OCI-LY7 (cell line): ENCODE measurements at regions of chr6 and their contacts with region 1.

Region 1: DNA sequence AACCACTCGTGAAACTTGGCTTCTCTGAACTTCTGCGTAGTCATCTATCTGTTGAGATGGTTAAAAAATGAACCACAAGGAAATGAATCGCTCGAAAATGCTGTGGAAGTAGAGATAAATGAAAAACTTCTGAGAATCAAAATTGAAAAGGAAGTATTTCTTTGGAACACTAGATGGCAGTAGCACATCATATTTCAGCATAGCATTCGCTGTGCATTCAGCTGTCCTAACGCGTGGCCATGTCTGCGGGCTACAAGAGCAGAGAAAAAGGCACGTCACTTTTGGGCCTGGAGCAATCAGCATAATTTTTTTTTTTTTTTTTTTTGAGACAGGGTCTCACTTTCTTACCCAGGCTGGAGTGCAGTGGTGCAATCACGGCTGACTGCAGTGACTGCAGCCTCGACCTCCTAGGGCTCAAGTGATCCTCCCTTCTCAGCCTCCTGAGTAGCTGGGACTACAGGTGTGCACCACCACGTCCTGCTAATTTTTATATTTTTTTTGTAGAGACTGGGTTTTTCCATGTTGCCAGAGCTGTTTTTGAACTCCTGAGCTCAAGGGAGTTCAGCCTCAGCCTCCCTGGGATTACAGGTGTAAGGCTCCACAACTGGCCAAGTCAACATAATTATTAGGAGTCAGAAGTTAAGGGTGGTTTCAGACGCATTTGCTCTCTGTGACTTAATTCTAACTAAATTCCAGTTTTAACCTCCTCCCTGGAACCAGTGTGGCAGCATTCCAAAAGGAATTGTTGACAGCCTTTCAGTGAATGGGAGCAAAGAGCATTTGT is 8.8 kb upstream of the PERP start:
- DNase-seq: peak; percentile 72
- H3K4me3 ChIP-seq: no peak overlapping the region
- H3K27ac ChIP-seq: no peak overlapping the region
- H3K4me1 ChIP-seq: peaks cover 12% of the 10 kb centered on the region
- CTCF ChIP-seq: peak; percentile 88

Region 2: DNA sequence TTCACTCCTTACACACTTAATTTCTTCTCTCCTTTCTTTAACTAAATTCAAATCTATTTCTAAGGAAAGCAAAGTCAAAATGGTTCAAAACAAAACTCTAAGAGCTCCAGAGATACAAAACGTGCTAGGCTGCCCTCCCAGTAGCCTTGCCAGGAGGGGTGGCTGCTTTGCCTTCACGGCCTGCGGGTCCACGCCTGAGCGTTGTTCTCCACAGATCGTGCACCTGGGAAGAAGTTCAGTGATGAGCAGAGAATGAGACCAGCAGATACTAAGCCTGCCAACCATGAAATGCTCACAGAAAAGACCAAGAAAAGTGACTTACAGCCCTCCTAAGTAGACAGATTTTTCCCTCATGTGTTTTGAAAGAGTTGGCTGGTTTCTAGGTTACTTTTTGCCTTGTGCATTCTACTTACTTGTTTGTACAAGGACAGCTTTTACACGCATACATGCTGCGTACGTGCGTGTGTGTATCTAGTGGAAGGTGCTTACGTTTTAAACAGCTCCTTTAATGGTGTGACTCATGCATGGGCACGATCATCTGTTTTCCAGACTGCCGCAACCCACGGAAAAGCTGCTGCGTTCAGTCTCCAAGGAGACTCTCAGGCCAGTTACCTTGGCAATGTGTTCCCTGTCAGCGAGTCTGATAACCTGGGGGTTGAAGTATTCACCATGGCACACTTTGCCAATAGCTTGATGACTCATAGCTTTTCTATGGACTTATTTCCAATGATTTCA is 134.6 kb after region 1 on chr6:
- CTCF ChIA-PET with region 1: no interaction called
- POLR2A ChIA-PET with region 1: no interaction called
- intact Hi-C with region 1: no loop called
- DNase-seq: no peak
- H3K4me3 ChIP-seq: no peak overlapping the region
- H3K27ac ChIP-seq: no peak overlapping the region
- H3K4me1 ChIP-seq: no peaks in the 10 kb centered on the region
- CTCF ChIP-seq: no peak

Region 3: DNA sequence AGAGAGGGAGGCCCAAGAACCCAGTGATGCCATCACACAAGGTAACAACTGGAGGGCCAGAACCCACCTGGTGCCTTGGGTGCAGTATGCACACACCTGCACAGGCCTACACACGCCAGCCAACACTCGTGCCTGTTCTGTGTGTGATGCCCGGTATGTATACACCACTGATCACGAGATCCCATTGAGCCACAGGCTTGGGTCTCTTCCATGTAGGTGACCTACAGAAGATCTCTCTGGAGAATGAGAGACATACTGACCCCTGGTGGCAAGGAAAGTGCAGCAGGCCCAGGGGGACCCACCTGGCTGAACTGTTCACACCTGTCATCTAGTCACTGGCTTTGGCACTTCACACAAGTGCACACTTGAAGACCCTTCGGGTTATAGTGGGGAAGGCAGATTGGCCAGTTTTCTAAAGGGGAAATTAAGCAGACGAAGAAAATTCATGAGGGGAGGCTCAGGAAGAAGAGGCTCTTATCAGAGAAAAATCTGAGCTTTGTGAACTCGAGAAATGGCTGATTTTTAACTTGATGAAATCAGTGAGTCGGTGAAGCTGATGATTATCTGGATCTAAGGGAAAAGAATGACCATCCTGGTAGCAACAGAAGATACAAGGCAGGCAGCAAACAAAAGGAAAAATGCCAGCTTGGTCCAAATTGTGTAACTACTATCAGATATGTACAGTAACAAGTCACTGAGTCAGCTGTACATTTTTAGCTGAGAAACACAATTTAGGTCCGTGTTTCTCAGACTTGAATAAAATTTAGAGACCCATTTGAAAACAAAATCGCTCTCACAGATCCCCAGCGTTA is 171.3 kb after region 1 on chr6:
- CTCF ChIA-PET with region 1: interaction called, 5 read pairs
- POLR2A ChIA-PET with region 1: no interaction called
- intact Hi-C with region 1: loop called (anchors 1 kb)
- DNase-seq: peak; percentile 48
- H3K4me3 ChIP-seq: no peak overlapping the region
- H3K27ac ChIP-seq: no peak overlapping the region
- H3K4me1 ChIP-seq: no peaks in the 10 kb centered on the region
- CTCF ChIP-seq: peak; percentile 81

Region 4: DNA sequence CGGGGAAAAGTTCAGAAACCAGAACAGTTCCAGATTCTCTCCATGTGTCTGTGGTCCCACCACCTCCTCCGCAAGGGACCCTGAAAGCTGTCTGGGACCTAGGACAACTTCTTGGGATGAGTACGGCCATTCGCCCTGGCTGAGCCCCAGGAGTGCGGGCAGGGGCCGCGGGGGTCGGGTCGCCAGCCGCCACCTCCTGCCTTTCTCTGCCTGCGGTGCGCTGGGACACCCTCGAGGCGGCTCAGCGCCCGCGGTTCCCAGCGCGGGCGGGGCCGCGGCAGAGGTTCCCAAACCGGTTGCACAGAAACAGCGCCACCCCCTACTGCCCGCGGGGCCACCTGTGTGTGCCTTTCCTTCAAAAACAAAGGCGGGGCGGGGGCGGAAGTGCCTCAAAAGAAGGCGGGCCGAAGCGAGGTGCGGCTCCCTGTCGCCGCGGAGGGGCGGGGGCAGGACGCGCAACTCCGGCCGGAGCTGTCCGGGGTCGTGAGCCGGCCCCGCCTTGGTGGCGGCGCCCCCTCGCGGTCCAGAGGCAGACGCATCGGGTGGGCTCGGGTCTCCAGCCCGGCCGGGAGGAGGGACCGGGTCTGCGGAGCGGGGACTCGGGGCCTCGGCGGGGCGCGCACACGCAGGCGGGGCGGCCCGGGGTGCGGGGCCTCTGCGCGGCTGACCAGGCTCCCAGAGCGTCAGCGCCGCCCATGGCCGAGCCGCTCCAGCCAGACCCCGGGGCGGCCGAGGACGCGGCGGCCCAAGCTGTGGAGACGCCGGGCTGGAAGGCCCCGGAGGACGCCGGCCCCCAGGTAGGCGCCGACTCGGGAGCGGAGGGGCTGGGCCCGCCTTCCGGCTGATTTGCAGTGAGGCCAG is 288.0 kb after region 1 on chr6 and contains the start of gene HEBP2:
- CTCF ChIA-PET with region 1: interaction called, 6 read pairs
- POLR2A ChIA-PET with region 1: interaction called, 5 read pairs
- intact Hi-C with region 1: loop called (anchors 1 kb)
- DNase-seq: peak; percentile 97
- H3K4me3 ChIP-seq: peak within 1 kb of the TSS; percentile 84
- H3K27ac ChIP-seq: peak within 1 kb of the TSS; percentile 43
- H3K4me1 ChIP-seq: peaks cover 20% of the 10 kb centered on the region
- CTCF ChIP-seq: peak; percentile 76
- total RNA-seq, gene HEBP2: 14.0 and 25.0 TPM in 2 replicates

Region 5: GRCh38 chr6:138428944-138429598 is 313.0 kb after region 1 on chr6:
- CTCF ChIA-PET with region 1: interaction called, 3 read pairs
- POLR2A ChIA-PET with region 1: interaction called, 4 read pairs
- intact Hi-C with region 1: loop called (anchors 5 kb)
- DNase-seq: peak; percentile 73
- H3K4me3 ChIP-seq: no peak overlapping the region
- H3K27ac ChIP-seq: no peak overlapping the region
- H3K4me1 ChIP-seq: no peaks in the 10 kb centered on the region
- CTCF ChIP-seq: peak; percentile 95

Region 6: DNA sequence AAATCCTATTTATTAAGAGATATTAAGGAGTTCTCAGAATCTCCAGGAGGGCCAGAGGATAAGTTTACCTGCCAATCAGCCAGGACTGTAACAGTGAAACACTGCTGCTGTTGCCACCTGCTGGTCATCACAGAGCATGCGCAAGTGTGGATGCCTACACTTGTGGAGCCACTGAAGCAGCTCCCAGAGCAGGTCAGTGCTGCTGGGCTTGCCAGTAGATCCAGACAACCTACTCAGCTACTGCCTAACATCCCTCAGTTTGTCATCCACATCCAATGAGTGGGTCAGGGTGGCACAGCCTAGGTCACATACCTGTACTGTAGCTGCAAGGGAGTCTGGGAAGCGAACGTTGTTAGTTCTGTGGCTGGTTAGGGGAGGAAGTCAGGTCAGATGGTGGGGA is 401.6 kb after region 1 on chr6:
- CTCF ChIA-PET with region 1: interaction called, 10 read pairs
- POLR2A ChIA-PET with region 1: no interaction called
- intact Hi-C with region 1: loop called (anchors 2 kb)
- DNase-seq: peak; percentile 76
- H3K4me3 ChIP-seq: no peak overlapping the region
- H3K27ac ChIP-seq: no peak overlapping the region
- H3K4me1 ChIP-seq: peaks cover 5% of the 10 kb centered on the region
- CTCF ChIP-seq: peak; percentile 85

Region 7: GRCh38 chr6:138588805-138589434 is 472.9 kb after region 1 on chr6:
- CTCF ChIA-PET with region 1: no interaction called
- POLR2A ChIA-PET with region 1: no interaction called
- intact Hi-C with region 1: loop called (anchors 1 kb)
- DNase-seq: peak; percentile 68
- H3K4me3 ChIP-seq: no peak overlapping the region
- H3K27ac ChIP-seq: no peak overlapping the region
- H3K4me1 ChIP-seq: peaks cover 16% of the 10 kb centered on the region
- CTCF ChIP-seq: peak; percentile 97

Region 8: GRCh38 chr6:138765896-138766655 is 650.0 kb after region 1 on chr6:
- CTCF ChIA-PET with region 1: no interaction called
- POLR2A ChIA-PET with region 1: interaction called, 7 read pairs
- intact Hi-C with region 1: loop called (anchors 5 kb)
- DNase-seq: peak; percentile 55
- H3K4me3 ChIP-seq: no peak overlapping the region
- H3K27ac ChIP-seq: no peak overlapping the region
- H3K4me1 ChIP-seq: no peaks in the 10 kb centered on the region
- CTCF ChIP-seq: peak; percentile 94